ENCODE measurements at regions of chr3 and their contacts with region 1.

Region 1: GRCh38 chr3:47791193-47791855 is 9.6 kb upstream of the SMARCC1 start:
- DNase-seq: no peak
- ATAC-seq: no peak
- H3K4me3 Mint-ChIP-seq: no peak overlapping the region
- H3K27ac Mint-ChIP-seq: no peak overlapping the region
- H3K4me1 Mint-ChIP-seq: peaks cover 2% of the 10 kb centered on the region
- H3K27me3 Mint-ChIP-seq: no peaks in the 10 kb centered on the region

Region 2: GRCh38 chr3:47542471-47543173 is 248.7 kb before region 1 on chr3:
- CTCF ChIA-PET with region 1: no interaction called
- DNase-seq: no peak
- ATAC-seq: no peak
- H3K4me3 Mint-ChIP-seq: no peak overlapping the region
- H3K27ac Mint-ChIP-seq: no peak overlapping the region
- H3K4me1 Mint-ChIP-seq: no peaks in the 10 kb centered on the region
- H3K27me3 Mint-ChIP-seq: peaks cover 8% of the 10 kb centered on the region

Region 3: DNA sequence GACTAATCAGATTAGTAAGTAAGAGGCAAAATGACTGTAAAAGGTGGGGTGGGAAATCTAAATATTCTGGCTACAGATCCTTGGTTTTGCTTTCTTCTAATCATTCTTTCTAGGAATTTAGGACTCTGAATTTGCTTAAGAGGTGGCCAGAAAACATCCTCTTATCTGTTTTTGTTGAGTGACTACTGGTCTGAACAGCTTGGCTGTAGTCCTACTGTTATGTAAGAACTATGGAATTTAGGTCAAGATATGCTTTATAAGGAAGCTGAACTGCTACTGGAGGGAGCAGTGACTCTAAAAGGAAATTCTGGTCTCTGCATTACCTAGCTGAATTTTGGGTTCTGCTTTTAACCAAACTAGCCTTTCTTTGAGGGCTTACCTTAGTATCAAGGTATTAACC is 179.1 kb before region 1 on chr3:
- CTCF ChIA-PET with region 1: no interaction called
- DNase-seq: no peak
- ATAC-seq: no peak
- H3K4me3 Mint-ChIP-seq: no peak overlapping the region
- H3K27ac Mint-ChIP-seq: peak overlapping the region; percentile 26
- H3K4me1 Mint-ChIP-seq: peaks cover 3% of the 10 kb centered on the region
- H3K27me3 Mint-ChIP-seq: no peaks in the 10 kb centered on the region

Region 4: GRCh38 chr3:47622671-47623461 is 168.5 kb before region 1 on chr3:
- CTCF ChIA-PET with region 1: interaction called, 10 read pairs
- DNase-seq: no peak
- ATAC-seq: no peak
- H3K4me3 Mint-ChIP-seq: no peak overlapping the region
- H3K27ac Mint-ChIP-seq: peak overlapping the region; percentile 37
- H3K4me1 Mint-ChIP-seq: peaks cover 3% of the 10 kb centered on the region
- H3K27me3 Mint-ChIP-seq: no peaks in the 10 kb centered on the region